Psoas muscle (tissue), 8 donors: ENCODE measurements at regions of chr9 and their contacts with region 1.

Region 1: GRCh38 chr9:96654443-96655197 is 497 bp downstream of the PRXL2C start:
- DNase-seq: peak; percentile 88 to 92
- ATAC-seq: peak; percentile 81 to 88 (median 86)
- H3K4me3 ChIP-seq: peak overlapping the region; percentile 69
- H3K27ac ChIP-seq: peak overlapping the region; percentile 88
- H3K4me1 ChIP-seq: peaks cover 36% of the 10 kb centered on the region
- H3K27me3 ChIP-seq: no peaks in the 10 kb centered on the region
- CTCF ChIP-seq: no peak

Region 2: DNA sequence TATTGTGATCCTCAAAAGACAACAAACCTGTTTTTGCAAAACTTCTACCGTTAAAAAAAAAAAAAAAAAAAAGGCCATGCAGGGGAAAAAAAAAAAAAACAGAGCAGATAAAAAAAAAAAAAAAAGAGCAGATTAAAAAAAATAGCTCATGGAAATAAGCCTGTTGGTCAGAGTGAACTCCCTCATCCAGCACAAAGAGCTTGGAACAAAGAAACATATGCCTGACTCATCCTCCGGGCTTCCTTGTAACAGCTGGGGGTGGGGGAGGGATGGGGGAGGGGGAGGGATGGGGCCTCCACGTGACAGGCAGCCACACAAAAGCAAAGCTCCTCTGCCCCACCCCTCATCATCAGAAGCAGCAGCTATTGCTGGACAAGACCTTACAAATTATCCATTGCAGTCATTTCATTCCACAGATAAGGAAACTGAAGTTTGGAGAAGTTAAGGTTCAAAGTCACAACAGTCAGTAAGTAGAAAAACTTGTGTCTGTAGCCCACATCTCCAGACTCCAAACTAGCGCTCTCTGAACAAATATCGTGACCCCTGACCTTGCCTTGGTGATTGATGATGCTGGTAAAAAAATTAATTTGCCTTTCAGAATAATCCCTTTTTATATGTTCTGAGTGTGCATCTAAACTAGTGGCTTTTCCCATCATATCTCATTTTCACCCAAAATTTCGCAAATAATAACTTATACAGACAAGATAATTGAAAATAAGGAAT is 310.0 kb before region 1 on chr9:
- intact Hi-C with region 1: loop called in 1 of 2 experiments (anchors 5 kb)
- DNase-seq: peak in 1 of 2 donors; percentile 40
- ATAC-seq: peak; percentile 52 to 80 (median 78)
- H3K4me3 ChIP-seq: no peak overlapping the region
- H3K27ac ChIP-seq: no peak overlapping the region
- H3K4me1 ChIP-seq: peaks cover 3% of the 10 kb centered on the region
- H3K27me3 ChIP-seq: no peaks in the 10 kb centered on the region
- CTCF ChIP-seq: no peak

Region 3: DNA sequence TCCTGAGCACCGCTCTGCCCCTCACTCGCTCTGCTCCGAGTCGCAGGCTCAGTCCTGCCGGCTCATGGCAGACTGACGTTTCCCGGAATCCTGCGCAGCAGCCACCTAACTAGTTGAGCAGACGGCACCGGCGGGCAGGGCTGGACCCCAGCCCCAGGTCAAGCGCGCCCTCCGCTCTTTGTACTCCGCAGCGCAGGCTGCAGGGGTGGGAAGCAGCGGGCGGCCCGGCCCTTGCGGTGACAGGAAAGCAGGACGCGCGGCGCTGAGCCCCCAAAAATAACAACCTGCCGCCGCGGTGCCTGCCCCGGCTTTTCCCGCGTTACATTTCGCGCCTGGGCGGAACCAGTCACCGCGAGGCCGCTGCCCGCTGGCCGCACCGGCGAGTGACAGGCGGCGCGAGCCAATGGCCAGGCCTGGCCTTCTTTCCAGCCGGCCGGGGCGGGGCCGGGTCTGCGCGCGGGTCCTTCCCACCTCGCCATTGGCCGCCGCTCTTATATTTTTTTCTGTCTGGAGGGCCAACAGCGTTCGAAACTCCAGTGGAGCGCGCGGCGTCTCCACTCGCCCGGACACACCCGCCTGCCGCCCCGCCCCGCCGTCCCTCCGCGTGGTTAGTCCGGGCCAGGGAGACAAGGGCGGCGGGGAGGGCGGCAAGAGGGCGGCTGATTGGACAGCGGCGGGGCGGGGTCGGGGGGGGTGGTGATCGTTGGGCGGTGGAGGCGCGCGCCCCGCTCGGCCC is 236.4 kb before region 1 on chr9 and contains the start of gene ZNF367:
- intact Hi-C with region 1: loop called in 1 of 2 experiments (anchors 2 kb)
- DNase-seq: peak; percentile 98 to 99
- ATAC-seq: peak; percentile 89 to 92 (median 90)
- H3K4me3 ChIP-seq: peak within 1 kb of the TSS; percentile 80
- H3K27ac ChIP-seq: peak within 1 kb of the TSS; percentile 95
- H3K4me1 ChIP-seq: peaks cover 27% of the 10 kb centered on the region
- H3K27me3 ChIP-seq: no peaks in the 10 kb centered on the region
- CTCF ChIP-seq: no peak
- total RNA-seq, gene ZNF367: 0.69 to 1.9 (median 1.2) TPM

Region 4: GRCh38 chr9:96604004-96604319 is 50.7 kb before region 1 on chr9:
- intact Hi-C with region 1: no loop called
- DNase-seq: peak; percentile 50 to 71
- ATAC-seq: peak; percentile 90 to 97 (median 92)
- H3K4me3 ChIP-seq: peak overlapping the region; percentile 31
- H3K27ac ChIP-seq: peak overlapping the region; percentile 75
- H3K4me1 ChIP-seq: no peaks in the 10 kb centered on the region
- H3K27me3 ChIP-seq: no peaks in the 10 kb centered on the region
- CTCF ChIP-seq: no peak

Region 5: DNA sequence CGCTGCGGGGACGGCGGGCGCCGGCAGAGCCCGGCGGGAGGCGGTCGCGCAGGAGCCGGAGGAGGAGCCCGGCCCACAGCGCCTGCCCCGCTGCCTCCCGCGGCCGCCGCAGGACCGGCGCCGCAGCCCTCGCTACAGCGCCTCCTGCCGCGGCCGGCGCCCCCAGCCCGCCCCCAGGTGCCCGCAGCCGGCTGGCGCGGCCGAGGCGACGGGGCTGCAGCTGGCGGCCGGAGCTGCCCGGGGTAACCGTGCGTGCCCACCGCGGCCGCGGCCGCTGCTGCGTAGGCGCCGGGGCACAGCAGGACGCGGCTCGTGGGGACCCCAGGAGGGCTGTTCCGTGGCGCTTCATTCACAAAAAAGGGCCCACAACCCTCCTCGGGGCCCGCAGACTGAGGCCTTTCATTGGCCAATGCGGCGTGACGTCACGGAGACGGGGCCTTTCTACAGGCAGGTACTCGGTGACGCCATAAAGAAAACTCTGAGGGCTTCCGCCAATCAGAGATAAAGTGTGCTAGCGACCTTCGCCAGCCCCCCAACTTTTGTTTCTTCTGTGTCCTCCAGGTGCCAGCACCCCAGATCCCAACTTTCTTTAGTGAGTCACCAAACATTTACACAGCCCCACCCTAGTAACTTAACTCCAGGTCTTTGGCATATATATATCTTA is 35.0 kb before region 1 on chr9 and contains the start of gene CDC14B:
- intact Hi-C with region 1: loop called in 1 of 2 experiments (anchors 5 kb)
- DNase-seq: peak; percentile 79 to 84
- ATAC-seq: peak; percentile 35 to 57 (median 44)
- H3K4me3 ChIP-seq: peak within 1 kb of the TSS; percentile 83
- H3K27ac ChIP-seq: peak within 1 kb of the TSS; percentile 94
- H3K4me1 ChIP-seq: no peaks in the 10 kb centered on the region
- H3K27me3 ChIP-seq: no peaks in the 10 kb centered on the region
- CTCF ChIP-seq: peak; percentile 9
- total RNA-seq, gene CDC14B: 2.1 to 10.7 (median 6.1) TPM